ENCODE measurements at regions of chr12 and their contacts with region 1.

Region 1: DNA sequence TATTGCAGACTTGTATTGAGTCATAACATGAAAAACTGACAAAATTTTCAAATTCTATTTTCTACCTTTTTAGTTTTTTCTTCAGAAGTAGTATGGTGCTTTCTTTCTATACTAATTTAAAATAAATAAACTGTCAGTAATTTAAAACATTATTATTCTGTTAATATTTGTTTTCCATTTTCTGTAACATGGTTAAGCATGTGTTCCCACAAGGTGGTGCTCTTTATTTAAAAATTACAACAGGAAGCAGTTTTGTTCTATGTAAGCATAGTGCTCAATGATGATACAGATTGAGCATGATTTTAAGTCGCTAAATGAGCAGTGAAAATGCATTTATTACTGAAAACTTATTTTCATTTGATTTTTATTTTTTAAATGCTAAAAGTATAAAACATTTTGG is 114.6 kb downstream of the PPFIA2 start:
- DNase-seq: peak in 2 of 9 experiments; percentile 51 to 62
- ATAC-seq: peak; percentile 55
- H3K4me3 ChIP-seq: no peak overlapping the region
- H3K4me3 Mint-ChIP-seq: no peak overlapping the region
- H3K27ac ChIP-seq: no peak overlapping the region
- H3K27ac Mint-ChIP-seq: no peak overlapping the region
- H3K4me1 ChIP-seq: no peaks in the 10 kb centered on the region
- H3K4me1 Mint-ChIP-seq: no peaks in the 10 kb centered on the region
- H3K27me3 ChIP-seq: no peaks in the 10 kb centered on the region
- H3K27me3 Mint-ChIP-seq: peaks cover 3% of the 10 kb centered on the region
- CTCF ChIP-seq: peak; percentile 70

Region 2: DNA sequence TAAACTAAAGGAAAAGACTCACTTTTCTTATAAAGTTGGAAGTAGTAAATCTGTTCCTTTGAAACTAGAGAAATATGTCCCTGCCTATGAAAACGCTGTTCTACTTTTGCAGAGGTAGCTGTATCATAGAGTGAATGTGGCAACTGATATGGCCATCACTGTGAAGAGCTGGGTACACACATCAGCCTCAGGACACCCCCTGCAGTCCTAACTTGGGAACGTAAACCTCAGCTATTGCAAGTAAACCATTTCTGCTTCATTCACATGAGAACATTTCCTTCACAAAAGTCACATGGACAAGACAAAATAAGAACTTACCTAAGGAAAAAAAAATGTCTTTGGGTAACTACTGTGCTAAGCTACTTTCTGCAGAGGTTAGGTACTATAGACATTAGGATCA is 348.0 kb after region 1 on chr12:
- CTCF ChIA-PET with region 1: interaction called, 15 read pairs
- POLR2A ChIA-PET with region 1: no interaction called
- intact Hi-C with region 1: loop called (anchors 1 to 2 kb)
- DNase-seq: peak in 7 of 9 experiments; percentile 5 to 65 (median 37)
- ATAC-seq: peak; percentile 63
- H3K4me3 ChIP-seq: no peak overlapping the region
- H3K4me3 Mint-ChIP-seq: no peak overlapping the region
- H3K27ac ChIP-seq: no peak overlapping the region
- H3K27ac Mint-ChIP-seq: no peak overlapping the region
- H3K4me1 ChIP-seq: no peaks in the 10 kb centered on the region
- H3K4me1 Mint-ChIP-seq: peaks cover 4% of the 10 kb centered on the region
- H3K27me3 ChIP-seq: no peaks in the 10 kb centered on the region
- H3K27me3 Mint-ChIP-seq: no peaks in the 10 kb centered on the region
- CTCF ChIP-seq: no peak

Region 3: DNA sequence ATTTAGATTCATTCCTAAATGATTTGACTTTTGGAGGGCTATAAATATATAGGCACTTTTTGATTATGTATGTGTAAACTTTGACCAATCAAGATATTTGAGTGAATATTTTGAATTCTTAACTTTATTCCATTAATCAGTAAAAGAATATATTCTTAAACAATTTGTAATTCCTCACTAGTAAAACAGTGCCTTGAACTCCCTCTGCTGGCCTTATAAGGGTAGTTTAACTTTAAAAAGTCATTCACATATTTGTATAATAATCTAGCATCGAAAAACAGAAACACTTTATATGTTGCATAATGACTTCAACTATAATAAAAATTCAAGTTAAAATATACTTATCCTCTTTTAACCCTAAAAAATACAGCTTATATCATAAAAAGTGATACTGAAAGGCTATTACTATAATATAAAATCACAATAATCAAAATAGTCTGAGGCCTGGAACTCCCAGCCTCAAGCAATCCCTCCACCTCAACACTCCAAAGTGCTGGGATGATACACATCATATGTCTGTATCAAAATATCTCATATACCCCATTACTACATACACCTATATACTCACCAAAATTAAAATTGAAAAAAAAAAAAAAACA is 682.5 kb after region 1 on chr12:
- CTCF ChIA-PET with region 1: no interaction called
- POLR2A ChIA-PET with region 1: no interaction called
- intact Hi-C with region 1: loop called in 1 of 2 experiments (anchors 2 kb)
- DNase-seq: peak in 2 of 9 experiments; percentile 21 to 24
- ATAC-seq: no peak
- H3K4me3 ChIP-seq: no peak overlapping the region
- H3K4me3 Mint-ChIP-seq: no peak overlapping the region
- H3K27ac ChIP-seq: no peak overlapping the region
- H3K27ac Mint-ChIP-seq: no peak overlapping the region
- H3K4me1 ChIP-seq: no peaks in the 10 kb centered on the region
- H3K4me1 Mint-ChIP-seq: no peaks in the 10 kb centered on the region
- H3K27me3 ChIP-seq: no peaks in the 10 kb centered on the region
- H3K27me3 Mint-ChIP-seq: peaks cover 8% of the 10 kb centered on the region
- CTCF ChIP-seq: peak; percentile 56

Region 4: DNA sequence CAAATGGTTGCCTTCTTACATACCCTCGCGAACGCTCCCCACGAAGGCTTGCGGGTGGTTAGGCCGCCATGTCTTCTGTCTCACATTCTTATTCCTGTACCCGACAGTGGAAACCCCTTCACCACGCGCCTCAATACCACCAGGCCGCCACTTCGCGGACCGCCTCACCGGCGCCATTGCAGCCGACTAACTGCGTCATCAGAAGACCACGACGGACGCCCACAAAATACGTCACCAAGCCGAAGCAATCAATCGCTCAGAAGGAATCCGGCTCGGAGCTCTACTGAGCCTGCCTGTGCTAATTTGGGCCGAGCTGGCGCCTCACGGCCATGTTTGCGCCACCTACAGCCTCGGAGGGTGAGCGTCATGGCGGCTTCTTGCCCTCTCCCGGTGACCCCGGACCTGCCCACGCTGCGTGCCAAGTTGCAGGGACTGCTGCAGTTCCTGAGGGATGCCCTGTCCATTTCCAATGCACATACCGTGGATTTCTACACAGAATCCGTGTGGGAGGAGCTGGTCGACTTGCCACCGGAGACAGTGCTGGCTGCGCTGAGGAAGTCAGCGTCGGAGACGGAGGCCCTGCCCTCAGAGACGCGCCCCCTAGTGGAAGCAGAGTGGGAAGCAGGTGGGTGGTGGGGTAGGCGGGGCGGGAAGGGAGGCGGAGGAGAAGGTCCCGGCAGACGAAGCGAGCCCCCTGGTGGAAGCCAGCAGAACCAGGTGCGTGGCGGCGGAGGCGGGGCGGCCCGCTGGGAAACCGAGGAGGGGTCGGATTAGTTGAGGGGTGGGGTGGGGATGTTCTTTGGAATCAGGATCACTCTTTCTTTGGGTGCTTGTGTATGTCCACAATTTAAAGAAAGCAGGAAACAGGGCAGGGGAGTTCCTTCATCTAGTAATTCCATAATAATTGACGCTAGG is 714.0 kb after region 1 on chr12 and contains the starts of genes CCDC59 and METTL25:
- CTCF ChIA-PET with region 1: interaction called, 4 read pairs
- POLR2A ChIA-PET with region 1: no interaction called
- intact Hi-C with region 1: loop called in 1 of 2 experiments (anchors 1 kb)
- DNase-seq: peak; percentile 98 to 99 (median 98)
- ATAC-seq: peak; percentile 89
- H3K4me3 ChIP-seq: peak within 1 kb of the TSS; percentile 80 to 97
- H3K4me3 Mint-ChIP-seq: peak within 1 kb of the TSS; percentile 93
- H3K27ac ChIP-seq: peak within 1 kb of the TSS; percentile 94 to 98
- H3K27ac Mint-ChIP-seq: peak within 1 kb of the TSS; percentile 99
- H3K4me1 ChIP-seq: peaks cover 32% of the 10 kb centered on the region
- H3K4me1 Mint-ChIP-seq: peaks cover 62% of the 10 kb centered on the region
- H3K27me3 ChIP-seq: no peaks in the 10 kb centered on the region
- H3K27me3 Mint-ChIP-seq: no peaks in the 10 kb centered on the region
- CTCF ChIP-seq: peak; percentile 99
- total RNA-seq, gene CCDC59: 173 to 174 TPM
- total RNA-seq, gene METTL25: 12.1 to 14.5 TPM

Measured in CD8-positive, alpha-beta T cell (primary cell).